Cardiac septum (tissue), 1 donor: ENCODE measurements at regions of chr2 and their contacts with region 1.

Region 1: GRCh38 chr2:40352041-40352702 is 99.7 kb downstream of the SLC8A1 start:
- DNase-seq: no peak

Region 2: DNA sequence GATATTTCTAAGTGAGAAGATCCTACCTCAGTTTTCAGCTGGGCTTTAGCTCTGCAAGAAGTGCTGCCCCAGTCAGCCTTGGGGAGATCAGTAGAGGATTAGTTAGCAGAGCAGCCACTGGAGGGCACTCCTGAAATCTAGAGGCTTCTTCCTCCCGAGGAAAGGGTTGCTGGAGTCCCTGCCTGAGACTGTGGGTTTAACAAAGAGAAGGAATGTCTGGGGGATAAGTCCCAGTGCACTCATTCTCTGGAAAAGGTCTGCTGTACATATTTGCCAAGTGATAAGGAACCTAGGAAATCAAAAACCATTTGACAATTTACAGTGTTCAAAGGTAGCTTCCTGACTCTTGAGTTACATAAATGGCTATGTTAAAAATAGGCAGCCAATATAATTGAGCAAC is 107.5 kb before region 1 on chr2:
- intact Hi-C with region 1: loop called (anchors 10 kb)
- DNase-seq: peak; percentile 79